ENCODE measurements at regions of chr16 and their contacts with region 1.

Region 1: GRCh38 chr16:9913604-9914326 is 268.5 kb downstream of the GRIN2A start:
- DNase-seq: no peak
- ATAC-seq: no peak
- H3K4me3 Mint-ChIP-seq: no peak overlapping the region
- H3K27ac Mint-ChIP-seq: no peak overlapping the region
- H3K4me1 Mint-ChIP-seq: no peaks in the 10 kb centered on the region
- H3K27me3 Mint-ChIP-seq: no peaks in the 10 kb centered on the region
- CTCF ChIP-seq: no peak

Region 2: DNA sequence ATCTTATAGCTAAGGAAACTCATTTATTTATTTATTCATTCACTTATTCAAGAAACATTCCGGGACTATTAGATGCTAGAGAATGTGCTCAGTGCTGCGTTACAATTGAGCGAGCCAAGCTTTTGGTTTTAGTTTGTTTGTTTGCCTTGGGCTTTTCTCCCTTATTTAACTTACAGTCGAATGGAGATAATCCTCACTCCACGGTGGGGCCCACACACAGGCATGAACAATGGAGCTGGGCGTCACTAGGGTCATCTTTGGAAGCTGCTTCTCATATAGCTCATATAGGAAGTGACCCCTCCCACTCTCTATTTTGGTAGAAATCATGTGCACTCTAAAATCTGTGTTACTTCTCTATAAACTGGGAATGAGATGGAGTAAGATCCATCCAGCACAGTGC is 1533.5 kb before region 1 on chr16:
- CTCF ChIA-PET with region 1: no interaction called
- POLR2A ChIA-PET with region 1: no interaction called
- intact Hi-C with region 1: loop called (anchors 10 kb)
- DNase-seq: no peak
- ATAC-seq: no peak
- H3K4me3 Mint-ChIP-seq: no peak overlapping the region
- H3K27ac Mint-ChIP-seq: no peak overlapping the region
- H3K4me1 Mint-ChIP-seq: no peaks in the 10 kb centered on the region
- H3K27me3 Mint-ChIP-seq: no peaks in the 10 kb centered on the region
- CTCF ChIP-seq: no peak

Region 3: DNA sequence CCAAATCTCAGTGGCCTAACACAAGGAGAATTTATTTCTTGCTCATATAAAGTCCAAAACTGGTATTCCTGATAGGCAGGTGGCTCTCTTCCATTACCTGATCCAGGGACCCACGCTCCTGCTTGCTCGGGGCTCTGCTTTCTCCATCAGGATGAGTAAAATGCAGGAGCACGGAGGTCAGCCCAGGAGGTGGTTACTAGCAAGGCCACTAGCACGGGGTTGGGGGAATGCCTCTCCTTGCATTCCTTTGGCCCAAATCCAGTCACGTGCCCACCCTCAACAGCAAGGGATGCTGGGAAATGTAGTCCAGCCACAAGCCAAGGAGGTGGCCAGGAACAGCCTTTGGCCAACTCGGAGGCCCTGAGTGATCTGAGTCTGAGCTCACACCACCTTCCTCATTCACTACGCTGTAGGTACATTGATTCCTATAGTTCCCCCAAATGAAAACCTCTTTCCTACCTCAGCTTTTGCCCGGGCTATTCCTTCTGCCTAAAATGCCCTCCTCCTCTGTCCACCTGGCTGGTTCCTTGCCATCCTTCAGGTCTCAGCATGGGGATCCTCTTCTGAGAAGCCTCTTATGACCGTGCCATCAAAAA is 860.7 kb before region 1 on chr16:
- CTCF ChIA-PET with region 1: no interaction called
- POLR2A ChIA-PET with region 1: no interaction called
- intact Hi-C with region 1: no loop called
- DNase-seq: no peak
- ATAC-seq: no peak
- H3K4me3 Mint-ChIP-seq: no peak overlapping the region
- H3K27ac Mint-ChIP-seq: no peak overlapping the region
- H3K4me1 Mint-ChIP-seq: no peaks in the 10 kb centered on the region
- H3K27me3 Mint-ChIP-seq: peaks cover 7% of the 10 kb centered on the region
- CTCF ChIP-seq: no peak